ENCODE measurements at regions of chr7 and their contacts with region 1.

Region 1: GRCh38 chr7:106313456-106313901 is 28.7 kb upstream of the NAMPT start:
- DNase-seq: no peak
- ATAC-seq: no peak

Region 2: GRCh38 chr7:106064771-106065585 is 248.5 kb before region 1 on chr7:
- intact Hi-C with region 1: no loop called
- DNase-seq: peak; percentile 88
- ATAC-seq: peak; percentile 91

Region 3: GRCh38 chr7:106371629-106372028 is 58.1 kb after region 1 on chr7:
- intact Hi-C with region 1: loop called (anchors 10 kb)
- DNase-seq: peak; percentile 46
- ATAC-seq: peak; percentile 11

Region 4: DNA sequence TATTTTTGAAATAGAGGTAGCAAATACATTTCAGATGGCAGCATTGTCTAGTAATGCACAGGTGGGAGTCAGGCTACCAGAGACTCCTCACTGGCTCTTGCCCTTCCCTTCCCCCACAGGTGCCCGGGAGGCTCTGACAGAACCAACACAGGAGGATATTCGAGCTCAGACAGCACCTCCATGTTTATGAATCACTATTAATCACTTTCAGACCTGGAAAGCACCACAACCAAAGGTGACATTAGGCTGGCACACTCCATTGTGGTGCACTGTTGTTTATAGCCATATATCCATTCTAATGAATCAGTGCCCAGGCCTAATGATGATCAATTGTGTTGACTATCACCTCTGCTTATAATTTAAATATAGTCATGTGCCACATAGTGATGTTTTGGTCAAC is 79.1 kb after region 1 on chr7:
- intact Hi-C with region 1: no loop called
- DNase-seq: no peak
- ATAC-seq: no peak